ENCODE measurements at regions of chr2 and their contacts with region 1.

Region 1: GRCh38 chr2:144332356-144333142 is 187.4 kb downstream of the ZEB2 start:
- DNase-seq: peak; percentile 65 to 97 (median 85)
- ATAC-seq: peak; percentile 95
- H3K4me3 ChIP-seq: peak overlapping the region; percentile 75
- H3K4me3 Mint-ChIP-seq: peak overlapping the region; percentile 91 to 96 (median 93)
- H3K27ac ChIP-seq: peak overlapping the region; percentile 64
- H3K27ac Mint-ChIP-seq: peak overlapping the region; percentile 54 to 91 (median 87)
- H3K4me1 ChIP-seq: peaks cover 5 to 26% of the 10 kb centered on the region in 2 donors
- H3K4me1 Mint-ChIP-seq: peaks cover 7 to 31% (median 13%) of the 10 kb centered on the region in 7 donors
- H3K27me3 ChIP-seq: no peaks in the 10 kb centered on the region
- H3K27me3 Mint-ChIP-seq: peaks cover 0 to 6% (median 0%) of the 10 kb centered on the region in 5 donors

Region 2: DNA sequence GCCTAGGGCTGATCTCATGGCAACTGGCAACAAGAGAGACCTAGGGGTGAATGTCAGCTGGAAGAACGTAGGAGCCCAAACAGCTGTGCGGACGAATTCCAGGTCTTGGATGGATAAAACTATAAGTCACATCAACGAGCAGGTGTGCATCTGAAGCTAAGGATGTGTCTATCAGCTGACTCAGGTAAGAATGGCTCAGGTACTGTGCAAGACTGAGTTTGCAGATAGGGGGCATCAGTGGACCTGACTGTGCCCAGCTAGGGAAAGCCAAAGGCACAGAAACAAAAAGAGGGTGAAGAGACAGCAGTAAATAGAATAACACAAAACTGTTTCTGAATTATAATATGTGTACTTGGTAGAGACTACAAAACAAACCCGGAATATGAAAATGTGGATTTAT is 169.9 kb before region 1 on chr2:
- CTCF ChIA-PET with region 1: no interaction called
- POLR2A ChIA-PET with region 1: no interaction called
- intact Hi-C with region 1: loop called in 1 of 2 experiments (anchors 5 kb)
- DNase-seq: peak in 4 of 9 donors; percentile 4 to 16 (median 14)
- ATAC-seq: peak; percentile 63
- H3K4me3 ChIP-seq: no peak overlapping the region
- H3K4me3 Mint-ChIP-seq: no peak overlapping the region
- H3K27ac ChIP-seq: no peak overlapping the region
- H3K27ac Mint-ChIP-seq: peak overlapping the region in 1 of 9 donors; percentile 13
- H3K4me1 ChIP-seq: no peaks in the 10 kb centered on the region
- H3K4me1 Mint-ChIP-seq: no peaks in the 10 kb centered on the region
- H3K27me3 ChIP-seq: no peaks in the 10 kb centered on the region
- H3K27me3 Mint-ChIP-seq: no peaks in the 10 kb centered on the region

Region 3: GRCh38 chr2:144183727-144184126 is 148.8 kb before region 1 on chr2:
- CTCF ChIA-PET with region 1: no interaction called
- POLR2A ChIA-PET with region 1: no interaction called
- intact Hi-C with region 1: loop called (anchors 1 to 5 kb)
- DNase-seq: peak; percentile 12 to 78 (median 71)
- ATAC-seq: peak; percentile 98
- H3K4me3 ChIP-seq: no peak overlapping the region
- H3K4me3 Mint-ChIP-seq: peak overlapping the region; percentile 37 to 87 (median 79)
- H3K27ac ChIP-seq: no peak overlapping the region
- H3K27ac Mint-ChIP-seq: peak overlapping the region in 8 of 9 donors; percentile 8 to 89 (median 60)
- H3K4me1 ChIP-seq: peaks cover 9 to 30% of the 10 kb centered on the region in 2 donors
- H3K4me1 Mint-ChIP-seq: peaks cover 9 to 26% (median 13%) of the 10 kb centered on the region in 7 donors
- H3K27me3 ChIP-seq: no peaks in the 10 kb centered on the region
- H3K27me3 Mint-ChIP-seq: no peaks in the 10 kb centered on the region

Region 4: DNA sequence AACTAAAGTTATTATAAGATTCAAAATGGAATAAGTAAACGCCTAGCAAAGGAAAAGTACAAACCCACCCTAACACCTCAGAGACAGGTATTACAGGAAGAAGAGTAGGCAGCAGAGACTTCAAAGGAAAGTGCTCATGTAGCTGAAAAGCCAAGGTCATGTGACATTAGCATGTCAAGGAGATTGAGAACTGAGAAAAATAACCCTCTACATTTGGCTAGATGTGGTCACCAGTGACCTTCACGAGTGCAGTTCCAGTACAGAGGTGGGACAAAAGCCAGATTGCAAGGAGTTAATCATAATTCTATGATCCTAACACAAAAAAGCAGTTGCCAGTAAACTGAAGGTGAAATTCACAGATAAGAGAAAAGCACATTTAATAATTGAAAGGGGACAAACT is 65.3 kb before region 1 on chr2:
- CTCF ChIA-PET with region 1: no interaction called
- POLR2A ChIA-PET with region 1: no interaction called
- intact Hi-C with region 1: loop called in 1 of 2 experiments (anchors 5 kb)
- DNase-seq: peak in 5 of 9 donors; percentile 11 to 31 (median 20)
- ATAC-seq: peak; percentile 57
- H3K4me3 ChIP-seq: no peak overlapping the region
- H3K4me3 Mint-ChIP-seq: peak overlapping the region in 4 of 10 donors; percentile 5 to 44 (median 25)
- H3K27ac ChIP-seq: no peak overlapping the region
- H3K27ac Mint-ChIP-seq: peak overlapping the region in 5 of 9 donors; percentile 10 to 51 (median 39)
- H3K4me1 ChIP-seq: peaks cover 9 to 17% of the 10 kb centered on the region in 2 donors
- H3K4me1 Mint-ChIP-seq: peaks cover 13 to 27% (median 21%) of the 10 kb centered on the region in 7 donors
- H3K27me3 ChIP-seq: no peaks in the 10 kb centered on the region
- H3K27me3 Mint-ChIP-seq: no peaks in the 10 kb centered on the region

Region 5: GRCh38 chr2:144516981-144517865 is 184.7 kb after region 1 on chr2:
- CTCF ChIA-PET with region 1: no interaction called
- POLR2A ChIA-PET with region 1: no interaction called
- intact Hi-C with region 1: loop called (anchors 1 to 5 kb)
- DNase-seq: peak in 6 of 9 donors; percentile 14 to 62 (median 32)
- ATAC-seq: peak; percentile 62
- H3K4me3 ChIP-seq: peak overlapping the region; percentile 49
- H3K4me3 Mint-ChIP-seq: no peak overlapping the region
- H3K27ac ChIP-seq: peak overlapping the region; percentile 37
- H3K27ac Mint-ChIP-seq: peak overlapping the region in 3 of 9 donors; percentile 46 to 85 (median 52)
- H3K4me1 ChIP-seq: peaks cover 21 to 22% of the 10 kb centered on the region in 2 donors
- H3K4me1 Mint-ChIP-seq: peaks cover 5 to 22% (median 18%) of the 10 kb centered on the region in 7 donors
- H3K27me3 ChIP-seq: peaks cover 0 to 33% of the 10 kb centered on the region in 2 donors
- H3K27me3 Mint-ChIP-seq: peaks cover 38 to 60% (median 52%) of the 10 kb centered on the region in 5 donors